ENCODE measurements at regions of chr5 and their contacts with region 1.

Region 1: GRCh38 chr5:123089914-123090670 is 1.1 kb downstream of the PRDM6 start:
- DNase-seq: no peak
- H3K4me3 ChIP-seq: peak overlapping the region; percentile 69 to 90
- H3K27ac ChIP-seq: peak overlapping the region; percentile 95 to 96
- H3K4me1 ChIP-seq: peaks cover 0 to 31% (median 11%) of the 10 kb centered on the region in 4 donors
- H3K27me3 ChIP-seq: no peaks in the 10 kb centered on the region
- CTCF ChIP-seq: no peak

Region 2: DNA sequence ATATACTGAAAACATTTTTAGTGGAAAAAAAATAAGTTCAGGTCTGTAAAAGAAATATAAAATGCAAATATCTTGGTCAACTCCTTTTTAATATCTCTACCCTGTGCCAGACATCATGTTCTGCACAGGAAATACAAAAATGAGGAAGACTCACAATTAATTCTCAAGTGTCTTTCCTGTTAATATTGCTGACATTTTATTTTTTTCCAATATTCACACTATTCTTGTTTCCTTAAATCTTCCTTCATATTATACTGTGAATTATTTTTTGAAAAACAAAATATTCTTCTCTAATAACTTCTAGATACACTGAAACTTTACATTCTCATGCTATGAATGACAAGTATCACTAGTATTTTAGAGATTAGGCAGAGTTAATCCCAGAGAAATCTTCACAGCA is 1573.1 kb before region 1 on chr5:
- intact Hi-C with region 1: no loop called
- DNase-seq: no peak
- H3K4me3 ChIP-seq: no peak overlapping the region
- H3K27ac ChIP-seq: no peak overlapping the region
- H3K4me1 ChIP-seq: no peaks in the 10 kb centered on the region
- H3K27me3 ChIP-seq: no peaks in the 10 kb centered on the region
- CTCF ChIP-seq: no peak

Region 3: DNA sequence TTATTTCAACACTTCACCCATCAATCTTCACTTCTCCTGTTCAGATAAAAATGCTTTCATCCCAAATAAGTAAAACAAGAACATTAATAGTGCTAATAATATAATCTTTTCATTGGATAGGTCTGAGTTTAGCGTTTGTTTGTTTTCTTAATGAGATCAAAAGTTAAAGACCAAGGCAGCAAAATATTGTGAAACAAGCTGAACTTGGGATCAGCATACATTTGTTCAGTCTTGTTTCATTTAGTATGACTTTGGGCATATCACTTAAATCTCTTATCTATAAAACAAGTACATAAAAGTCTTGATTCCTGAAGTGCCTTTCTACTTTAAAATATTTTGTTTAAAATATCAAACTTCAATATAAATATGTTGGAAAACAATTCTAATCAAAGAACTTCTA is 258.1 kb before region 1 on chr5:
- intact Hi-C with region 1: no loop called
- DNase-seq: no peak
- H3K4me3 ChIP-seq: no peak overlapping the region
- H3K27ac ChIP-seq: no peak overlapping the region
- H3K4me1 ChIP-seq: no peaks in the 10 kb centered on the region
- H3K27me3 ChIP-seq: no peaks in the 10 kb centered on the region
- CTCF ChIP-seq: no peak

Region 4: GRCh38 chr5:123036391-123037103 is 53.5 kb before region 1 on chr5 and contains the start of gene PPIC:
- intact Hi-C with region 1: loop called (anchors 5 kb)
- DNase-seq: peak; percentile 86 to 94
- H3K4me3 ChIP-seq: peak within 1 kb of the TSS; percentile 86
- H3K27ac ChIP-seq: peak within 1 kb of the TSS; percentile 86 to 97
- H3K4me1 ChIP-seq: peaks cover 0 to 24% (median 15%) of the 10 kb centered on the region in 4 donors
- H3K27me3 ChIP-seq: no peaks in the 10 kb centered on the region
- CTCF ChIP-seq: no peak

Region 5: GRCh38 chr5:123132316-123132715 is 42.2 kb after region 1 on chr5:
- intact Hi-C with region 1: no loop called
- DNase-seq: no peak
- H3K4me3 ChIP-seq: no peak overlapping the region
- H3K27ac ChIP-seq: peak overlapping the region; percentile 43 to 57
- H3K4me1 ChIP-seq: peaks cover 0 to 65% (median 18%) of the 10 kb centered on the region in 4 donors
- H3K27me3 ChIP-seq: no peaks in the 10 kb centered on the region
- CTCF ChIP-seq: no peak

Region 6: GRCh38 chr5:123164054-123164453 is 74.0 kb after region 1 on chr5:
- intact Hi-C with region 1: loop called (anchors 5 kb)
- DNase-seq: no peak
- H3K4me3 ChIP-seq: no peak overlapping the region
- H3K27ac ChIP-seq: peak overlapping the region; percentile 44 to 46
- H3K4me1 ChIP-seq: peaks cover 0 to 54% (median 17%) of the 10 kb centered on the region in 4 donors
- H3K27me3 ChIP-seq: no peaks in the 10 kb centered on the region
- CTCF ChIP-seq: no peak

Region 7: DNA sequence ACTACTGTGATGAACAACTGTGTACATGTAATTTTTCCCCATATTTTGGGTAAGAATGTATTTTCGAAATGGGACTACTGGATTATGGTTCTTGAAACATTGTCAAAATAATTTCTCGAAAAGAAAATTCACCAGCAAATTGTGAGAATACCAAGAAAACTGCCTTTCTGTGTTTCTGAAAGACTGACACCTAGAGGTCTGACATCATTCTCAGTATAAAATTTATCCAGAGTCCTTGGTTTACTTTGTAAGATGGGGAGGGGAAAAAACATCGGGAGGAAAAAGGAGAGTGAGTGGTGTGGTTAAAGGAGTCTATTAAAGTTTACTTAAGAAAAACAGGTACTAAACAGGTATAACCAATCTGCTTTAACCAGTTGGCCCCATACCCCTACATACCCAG is 183.9 kb after region 1 on chr5:
- intact Hi-C with region 1: loop called (anchors 10 kb)
- DNase-seq: no peak
- H3K4me3 ChIP-seq: no peak overlapping the region
- H3K27ac ChIP-seq: no peak overlapping the region
- H3K4me1 ChIP-seq: peaks cover 0 to 48% (median 12%) of the 10 kb centered on the region in 4 donors
- H3K27me3 ChIP-seq: no peaks in the 10 kb centered on the region
- CTCF ChIP-seq: peak in 1 of 2 experiments; percentile 37

Region 8: GRCh38 chr5:123294544-123294943 is 204.5 kb after region 1 on chr5:
- intact Hi-C with region 1: no loop called
- DNase-seq: no peak
- H3K4me3 ChIP-seq: no peak overlapping the region
- H3K27ac ChIP-seq: no peak overlapping the region
- H3K4me1 ChIP-seq: peaks cover 0 to 31% (median 0%) of the 10 kb centered on the region in 4 donors
- H3K27me3 ChIP-seq: no peaks in the 10 kb centered on the region
- CTCF ChIP-seq: no peak

Region 9: GRCh38 chr5:123344816-123345426 is 254.8 kb after region 1 on chr5:
- intact Hi-C with region 1: loop called (anchors 5 kb)
- DNase-seq: peak; percentile 36 to 62
- H3K4me3 ChIP-seq: peak overlapping the region in 1 of 2 donors; percentile 24
- H3K27ac ChIP-seq: peak overlapping the region in 1 of 2 donors; percentile 40
- H3K4me1 ChIP-seq: peaks cover 0 to 38% (median 3%) of the 10 kb centered on the region in 4 donors
- H3K27me3 ChIP-seq: no peaks in the 10 kb centered on the region
- CTCF ChIP-seq: peak; percentile 69 to 77

Region 10: DNA sequence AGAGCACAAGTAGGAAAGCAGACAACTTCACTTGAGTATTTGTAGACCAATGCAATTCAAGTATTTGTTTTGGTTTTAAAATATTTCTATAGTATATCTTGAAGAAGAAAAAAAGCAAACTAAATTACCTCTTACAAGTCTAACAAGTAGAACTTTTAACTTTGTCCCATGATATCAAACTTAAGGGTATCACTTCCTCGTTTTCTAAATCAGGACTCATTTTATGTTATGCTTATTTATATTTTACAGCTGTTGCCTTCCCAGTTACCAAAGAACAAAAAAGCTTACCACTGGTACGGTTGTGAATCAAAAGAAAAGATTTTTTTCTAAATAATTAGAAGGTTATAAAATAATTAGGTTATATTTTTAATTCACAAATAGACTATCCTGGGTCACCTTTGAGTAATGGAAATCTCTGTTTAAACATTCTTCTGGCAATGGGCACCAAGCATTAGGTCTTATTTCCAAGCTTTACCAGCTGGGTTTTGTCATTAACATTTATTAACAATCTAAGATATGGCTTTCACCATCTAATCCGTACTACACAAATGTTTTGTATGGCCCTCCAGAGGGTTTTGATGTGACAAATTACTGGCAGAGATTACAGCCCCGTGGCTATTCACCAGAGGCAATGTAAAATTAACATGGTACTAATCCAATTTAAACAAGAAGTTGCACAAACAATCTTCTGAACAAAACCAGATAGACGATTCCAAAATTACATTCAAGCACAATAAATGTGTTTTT is 269.5 kb after region 1 on chr5:
- intact Hi-C with region 1: loop called (anchors 5 kb)
- DNase-seq: peak; percentile 49 to 66
- H3K4me3 ChIP-seq: no peak overlapping the region
- H3K27ac ChIP-seq: peak overlapping the region; percentile 57 to 58
- H3K4me1 ChIP-seq: peaks cover 0 to 63% (median 10%) of the 10 kb centered on the region in 4 donors
- H3K27me3 ChIP-seq: no peaks in the 10 kb centered on the region
- CTCF ChIP-seq: no peak

Measured in tibial artery (tissue), 4 donors.